B cell (primary cell): ENCODE measurements at regions of chr17 and their contacts with region 1.

Region 1: GRCh38 chr17:82320956-82321927 is 3.8 kb upstream of the CD7 start:
- DNase-seq: peak; percentile 81
- ATAC-seq: peak; percentile 83
- H3K4me3 ChIP-seq: peak overlapping the region in 3 of 5 experiments; percentile 21 to 31 (median 25)
- H3K4me3 Mint-ChIP-seq: peak overlapping the region; percentile 73
- H3K27ac ChIP-seq: no peak overlapping the region
- H3K27ac Mint-ChIP-seq: peak overlapping the region; percentile 42
- H3K4me1 ChIP-seq: peaks cover 9 to 12% of the 10 kb centered on the region in 2 donors
- H3K4me1 Mint-ChIP-seq: peaks cover 3% of the 10 kb centered on the region
- H3K27me3 ChIP-seq: peaks cover 0 to 13% (median 3%) of the 10 kb centered on the region in 4 experiments
- H3K27me3 Mint-ChIP-seq: no peaks in the 10 kb centered on the region
- CTCF ChIP-seq: peak; percentile 98

Region 2: GRCh38 chr17:82205719-82206508 is 115.3 kb before region 1 on chr17:
- CTCF ChIA-PET with region 1: interaction called, 25 read pairs
- POLR2A ChIA-PET with region 1: interaction called, 11 read pairs
- intact Hi-C with region 1: loop called (anchors 1 kb)
- DNase-seq: peak; percentile 89
- ATAC-seq: peak; percentile 98
- H3K4me3 ChIP-seq: peak overlapping the region in 3 of 5 experiments; percentile 3 to 34 (median 21)
- H3K4me3 Mint-ChIP-seq: peak overlapping the region; percentile 54
- H3K27ac ChIP-seq: peak overlapping the region; percentile 73
- H3K27ac Mint-ChIP-seq: peak overlapping the region; percentile 90
- H3K4me1 ChIP-seq: peaks cover 10 to 11% of the 10 kb centered on the region in 2 donors
- H3K4me1 Mint-ChIP-seq: peaks cover 19% of the 10 kb centered on the region
- H3K27me3 ChIP-seq: no peaks in the 10 kb centered on the region
- H3K27me3 Mint-ChIP-seq: no peaks in the 10 kb centered on the region
- CTCF ChIP-seq: peak; percentile 93

Region 3: DNA sequence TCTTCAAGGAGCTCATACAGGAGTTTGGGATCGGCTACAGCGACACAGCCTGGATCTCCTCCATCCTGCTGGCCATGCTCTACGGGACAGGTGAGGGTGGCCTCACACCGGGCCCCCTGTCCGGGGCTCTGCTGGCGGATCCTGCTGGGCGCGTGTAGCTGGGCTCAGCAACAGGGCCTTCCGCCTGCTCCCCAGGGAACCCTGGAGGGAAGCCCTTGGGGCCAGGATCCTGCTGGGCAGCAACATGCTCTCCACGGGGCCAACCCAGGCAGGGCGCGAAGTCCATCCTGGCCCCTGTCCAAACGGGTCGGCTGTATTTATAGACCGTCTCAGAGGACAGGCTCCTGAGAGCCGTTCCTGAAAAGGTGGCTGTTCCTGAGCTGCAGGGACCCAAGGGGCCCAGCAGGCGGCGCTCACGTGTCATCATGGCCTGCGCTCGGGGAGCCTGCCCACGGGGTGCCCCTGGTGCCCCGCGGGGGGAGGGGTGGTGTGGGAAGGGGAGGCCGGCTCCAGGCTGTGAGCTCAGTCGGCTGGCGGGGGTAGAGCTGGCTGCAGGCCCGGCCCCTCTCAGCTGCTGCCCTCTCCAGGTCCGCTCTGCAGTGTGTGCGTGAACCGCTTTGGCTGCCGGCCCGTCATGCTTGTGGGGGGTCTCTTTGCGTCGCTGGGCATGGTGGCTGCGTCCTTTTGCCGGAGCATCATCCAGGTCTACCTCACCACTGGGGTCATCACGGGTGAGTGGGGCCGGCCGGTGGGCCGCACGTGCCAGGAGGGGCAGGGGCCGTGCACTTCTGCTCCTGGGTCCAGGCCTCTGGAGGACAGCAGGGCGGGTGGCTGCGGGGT is 84.9 kb before region 1 on chr17:
- CTCF ChIA-PET with region 1: interaction called, 53 read pairs
- POLR2A ChIA-PET with region 1: no interaction called
- intact Hi-C with region 1: loop called (anchors 1 kb)
- DNase-seq: peak; percentile 81
- ATAC-seq: peak; percentile 63
- H3K4me3 ChIP-seq: no peak overlapping the region
- H3K4me3 Mint-ChIP-seq: no peak overlapping the region
- H3K27ac ChIP-seq: no peak overlapping the region
- H3K27ac Mint-ChIP-seq: peak overlapping the region; percentile 37
- H3K4me1 ChIP-seq: peaks cover 17 to 69% of the 10 kb centered on the region in 2 donors
- H3K4me1 Mint-ChIP-seq: peaks cover 51% of the 10 kb centered on the region
- H3K27me3 ChIP-seq: no peaks in the 10 kb centered on the region
- H3K27me3 Mint-ChIP-seq: no peaks in the 10 kb centered on the region
- CTCF ChIP-seq: peak; percentile 83

Region 4: DNA sequence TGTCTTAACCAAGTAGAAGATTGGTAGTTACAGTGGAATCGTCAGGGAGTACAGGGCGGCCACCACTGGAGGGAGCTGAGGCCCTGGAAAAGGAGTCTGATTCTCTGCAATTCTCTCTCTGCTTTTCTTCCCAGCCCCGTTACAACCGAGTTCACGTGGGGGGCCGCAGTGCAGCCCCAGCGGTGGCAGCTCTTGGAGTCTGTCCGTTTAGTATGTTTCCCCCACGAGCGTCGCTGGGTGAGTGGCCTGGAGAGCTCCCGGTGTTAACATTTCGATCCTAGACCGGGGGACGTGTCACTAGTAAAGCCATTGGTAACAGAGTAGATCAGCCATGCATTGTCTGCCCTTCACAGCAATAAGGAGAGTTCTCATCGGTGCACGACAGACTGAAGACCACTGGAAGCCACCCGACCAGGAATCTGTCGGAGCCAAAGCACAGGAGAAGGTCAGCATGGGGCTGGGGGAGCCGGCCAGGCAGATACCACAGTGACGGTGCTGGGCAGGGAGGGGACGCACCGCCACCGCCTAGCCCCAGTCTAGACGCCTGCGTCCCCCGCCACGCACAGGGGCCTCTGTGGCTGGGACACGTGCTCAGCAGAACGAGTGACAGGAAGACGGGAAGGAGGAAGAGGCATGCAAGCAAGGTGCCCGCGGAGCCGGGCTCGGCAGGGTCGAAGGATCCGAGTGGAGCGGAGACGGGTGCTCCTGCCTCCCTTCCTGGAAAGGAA is 76.7 kb before region 1 on chr17:
- CTCF ChIA-PET with region 1: interaction called, 12 read pairs
- POLR2A ChIA-PET with region 1: no interaction called
- intact Hi-C with region 1: loop called (anchors 1 kb)
- DNase-seq: peak; percentile 35
- ATAC-seq: no peak
- H3K4me3 ChIP-seq: no peak overlapping the region
- H3K4me3 Mint-ChIP-seq: no peak overlapping the region
- H3K27ac ChIP-seq: no peak overlapping the region
- H3K27ac Mint-ChIP-seq: no peak overlapping the region
- H3K4me1 ChIP-seq: peaks cover 3 to 22% of the 10 kb centered on the region in 2 donors
- H3K4me1 Mint-ChIP-seq: peaks cover 39% of the 10 kb centered on the region
- H3K27me3 ChIP-seq: no peaks in the 10 kb centered on the region
- H3K27me3 Mint-ChIP-seq: no peaks in the 10 kb centered on the region
- CTCF ChIP-seq: peak; percentile 45

Region 5: DNA sequence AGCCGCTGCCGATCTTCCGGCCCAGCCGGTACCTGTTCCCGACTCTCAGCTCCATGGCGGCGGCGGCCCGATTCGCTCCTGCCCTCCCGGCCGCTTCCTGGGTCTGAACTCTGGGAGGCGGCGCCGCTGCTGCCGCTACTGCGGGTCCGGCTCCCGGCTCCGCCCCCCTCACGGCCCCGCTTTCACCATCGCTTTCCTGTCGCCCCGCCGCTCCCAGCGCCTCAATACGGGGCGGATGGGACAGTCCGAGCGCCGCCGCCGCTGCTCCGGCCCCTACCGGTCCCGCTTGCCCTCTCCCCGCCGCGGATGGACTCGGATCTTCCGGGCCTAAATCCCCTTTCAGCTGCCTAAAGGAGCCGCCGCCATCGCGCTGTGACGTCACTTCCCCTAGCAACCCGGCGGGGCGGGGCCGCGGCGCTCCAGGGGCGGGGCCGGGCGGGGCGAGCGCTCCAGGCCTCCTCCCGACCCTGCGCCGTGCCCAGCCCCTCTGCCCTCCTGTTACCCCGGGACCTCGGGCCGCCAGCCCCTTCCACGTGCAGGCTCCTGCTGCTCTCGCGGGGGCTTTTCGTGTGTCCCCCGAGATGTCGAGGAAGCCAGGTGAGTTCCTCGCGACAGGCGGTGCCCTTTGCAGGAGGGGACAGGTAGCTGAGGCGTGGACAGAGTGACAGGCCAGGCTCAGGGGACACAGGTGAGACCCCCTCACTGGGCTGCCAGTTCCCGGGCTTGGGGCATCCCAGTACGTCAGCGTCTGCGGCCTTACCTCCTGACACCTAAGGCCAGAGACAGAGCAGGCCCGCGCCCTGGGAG is 47.7 kb before region 1 on chr17 and contains the start of gene CSNK1D:
- CTCF ChIA-PET with region 1: interaction called, 4 read pairs
- POLR2A ChIA-PET with region 1: no interaction called
- intact Hi-C with region 1: loop called (anchors 1 kb)
- DNase-seq: peak; percentile 97
- ATAC-seq: peak; percentile 77
- H3K4me3 ChIP-seq: peak within 1 kb of the TSS; percentile 70 to 87 (median 80)
- H3K4me3 Mint-ChIP-seq: peak within 1 kb of the TSS; percentile 93
- H3K27ac ChIP-seq: peak within 1 kb of the TSS; percentile 83 to 95
- H3K27ac Mint-ChIP-seq: peak within 1 kb of the TSS; percentile 99
- H3K4me1 ChIP-seq: peaks cover 30 to 48% of the 10 kb centered on the region in 2 donors
- H3K4me1 Mint-ChIP-seq: peaks cover 41% of the 10 kb centered on the region
- H3K27me3 ChIP-seq: peaks cover 0 to 5% (median 0%) of the 10 kb centered on the region in 4 experiments
- H3K27me3 Mint-ChIP-seq: no peaks in the 10 kb centered on the region
- CTCF ChIP-seq: no peak
- total RNA-seq, gene CSNK1D: 241 and 258 TPM in 2 replicates

Region 6: DNA sequence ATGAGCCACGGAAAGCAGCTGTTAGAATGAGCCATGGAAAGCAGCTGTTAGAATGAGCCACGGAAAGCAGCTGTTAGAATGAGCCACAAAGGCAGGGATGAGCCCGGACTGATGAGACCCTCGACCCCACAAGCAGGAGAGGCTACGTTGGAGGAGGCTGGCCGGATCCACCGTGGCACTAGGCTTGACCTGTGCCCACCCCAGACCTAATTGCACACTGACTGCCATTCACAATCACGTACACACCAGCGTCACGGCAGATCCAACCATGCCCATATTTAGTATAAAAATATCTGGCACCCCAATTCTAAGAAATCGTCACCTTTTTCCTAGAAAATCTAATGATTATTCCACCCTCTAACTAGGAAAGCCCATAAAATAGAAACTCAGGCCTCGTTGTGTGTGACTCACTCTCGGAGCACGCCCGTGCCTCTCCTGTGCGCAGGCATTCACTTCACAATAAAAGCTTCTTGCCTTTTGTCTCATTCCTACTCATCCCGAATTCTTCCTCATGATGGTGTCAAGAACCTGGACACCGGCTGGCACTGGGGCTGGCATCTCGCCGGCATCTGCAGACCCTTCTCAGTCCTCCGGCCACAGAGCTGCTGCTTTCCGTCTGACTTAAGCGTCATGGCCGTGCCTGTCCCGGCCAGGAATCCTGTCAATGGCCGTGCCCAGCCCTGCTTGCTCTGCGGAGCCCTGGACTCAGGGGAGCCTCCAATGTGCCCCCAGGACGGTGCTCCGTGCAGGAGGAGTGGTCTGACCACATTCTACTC is 17.8 kb after region 1 on chr17:
- CTCF ChIA-PET with region 1: no interaction called
- POLR2A ChIA-PET with region 1: no interaction called
- intact Hi-C with region 1: no loop called
- DNase-seq: no peak
- ATAC-seq: no peak
- H3K4me3 ChIP-seq: no peak overlapping the region
- H3K4me3 Mint-ChIP-seq: no peak overlapping the region
- H3K27ac ChIP-seq: no peak overlapping the region
- H3K27ac Mint-ChIP-seq: no peak overlapping the region
- H3K4me1 ChIP-seq: peaks cover 13 to 15% of the 10 kb centered on the region in 2 donors
- H3K4me1 Mint-ChIP-seq: peaks cover 14% of the 10 kb centered on the region
- H3K27me3 ChIP-seq: peaks cover 0 to 5% (median 0%) of the 10 kb centered on the region in 4 experiments
- H3K27me3 Mint-ChIP-seq: peaks cover 5% of the 10 kb centered on the region
- CTCF ChIP-seq: no peak